ENCODE measurements at regions of chr17 and their contacts with region 1.

Region 1: DNA sequence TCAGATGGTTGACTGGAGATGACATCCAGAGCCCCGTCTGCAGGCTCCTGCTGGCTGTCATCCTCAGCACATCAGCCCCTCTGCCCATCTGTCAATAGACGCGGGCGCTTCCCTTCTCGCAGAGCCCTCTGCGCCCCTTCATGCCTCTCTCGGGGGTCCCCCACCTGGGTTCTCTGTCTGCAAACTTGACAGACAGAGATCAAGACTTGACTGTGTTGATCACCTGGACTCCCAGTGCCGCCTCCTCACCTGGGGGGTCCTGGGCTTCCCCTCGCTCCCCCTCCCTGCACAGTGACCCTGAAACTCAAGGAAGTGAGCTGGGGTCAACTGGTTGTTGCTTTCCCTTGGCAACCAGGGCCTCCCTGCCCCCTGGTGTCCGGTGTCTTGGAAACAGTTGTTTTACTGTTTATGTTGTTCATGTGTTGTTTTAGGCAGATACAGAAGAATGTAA is 31.9 kb downstream of the RNF213 start:
- DNase-seq: no peak
- H3K4me3 ChIP-seq: no peak overlapping the region
- H3K27ac ChIP-seq: no peak overlapping the region
- H3K4me1 ChIP-seq: peaks cover 15% of the 10 kb centered on the region
- H3K27me3 ChIP-seq: no peaks in the 10 kb centered on the region
- CTCF ChIP-seq: no peak

Region 2: DNA sequence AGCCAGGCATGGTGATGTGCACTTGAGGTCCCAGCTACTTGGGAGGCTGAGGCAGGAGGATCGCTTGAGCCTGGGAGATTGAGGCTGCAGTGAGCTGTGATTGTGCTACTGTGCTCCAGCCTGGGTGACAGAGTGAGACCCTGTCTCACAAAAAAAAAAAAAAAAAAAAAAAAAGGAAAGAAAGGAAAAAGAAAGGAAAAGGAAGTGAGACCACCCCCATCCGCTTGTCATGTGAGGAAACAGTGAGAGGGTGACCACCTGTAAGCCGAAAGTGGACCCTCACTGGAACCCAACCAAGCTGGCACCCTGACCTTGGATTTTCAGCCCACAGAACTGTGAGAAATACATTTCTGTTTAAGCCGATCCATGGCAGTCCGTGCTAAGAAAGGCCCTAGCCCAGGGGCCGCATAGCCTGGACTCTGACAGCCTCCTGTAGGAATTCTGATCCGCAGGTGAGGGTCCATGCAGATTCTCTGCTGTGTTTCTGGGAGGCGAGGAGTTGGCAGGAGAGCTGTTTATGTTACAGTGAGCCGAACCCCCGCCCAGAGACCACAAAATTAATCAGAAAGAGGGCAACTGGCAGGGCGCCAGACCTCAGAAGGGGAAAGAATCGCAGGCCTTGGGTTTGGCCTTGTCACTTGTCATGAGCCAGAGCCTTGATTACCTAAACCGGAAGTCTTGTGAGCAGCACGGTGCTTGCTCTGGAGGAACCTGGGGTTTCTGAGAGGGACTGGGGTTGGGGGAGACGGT is 73.4 kb before region 1 on chr17:
- CTCF ChIA-PET with region 1: no interaction called
- dilution Hi-C with region 1: loop called (anchors 5 kb)
- in situ Hi-C with region 1: no loop called
- intact Hi-C with region 1: no loop called
- DNase-seq: peak; percentile 82
- H3K4me3 ChIP-seq: peak overlapping the region; percentile 27 to 70 (median 59)
- H3K27ac ChIP-seq: no peak overlapping the region
- H3K4me1 ChIP-seq: peaks cover 12% of the 10 kb centered on the region
- H3K27me3 ChIP-seq: no peaks in the 10 kb centered on the region
- CTCF ChIP-seq: no peak

Region 3: GRCh38 chr17:80316927-80317702 is 24.6 kb after region 1 on chr17:
- CTCF ChIA-PET with region 1: no interaction called
- dilution Hi-C with region 1: no loop called
- in situ Hi-C with region 1: no loop called
- intact Hi-C with region 1: no loop called
- DNase-seq: no peak
- H3K4me3 ChIP-seq: no peak overlapping the region
- H3K27ac ChIP-seq: no peak overlapping the region
- H3K4me1 ChIP-seq: no peaks in the 10 kb centered on the region
- H3K27me3 ChIP-seq: no peaks in the 10 kb centered on the region
- CTCF ChIP-seq: no peak

Measured in mammary epithelial cell (primary cell).